ENCODE measurements at regions of chr18 and their contacts with region 1.

Region 1: GRCh38 chr18:55589625-55590291 is 1.8 kb upstream of the TCF4 start:
- DNase-seq: peak; percentile 93
- ATAC-seq: peak; percentile 88
- H3K4me3 ChIP-seq: peak overlapping the region; percentile 91
- H3K27ac ChIP-seq: peak overlapping the region; percentile 42
- H3K4me1 ChIP-seq: peaks cover 5% of the 10 kb centered on the region; the same call in 1 of the 2 replicates
- H3K27me3 ChIP-seq: no peaks in the 10 kb centered on the region
- CTCF ChIP-seq: no peak

Region 2: GRCh38 chr18:55343396-55344073 is 246.2 kb before region 1 on chr18:
- CTCF ChIA-PET with region 1: no interaction called
- POLR2A ChIA-PET with region 1: no interaction called
- intact Hi-C with region 1: loop called (anchors 5 kb)
- DNase-seq: peak; percentile 46
- ATAC-seq: peak; percentile 37; the same call in 1 of the 2 replicates
- H3K4me3 ChIP-seq: no peak overlapping the region
- H3K27ac ChIP-seq: no peak overlapping the region
- H3K4me1 ChIP-seq: no peaks in the 10 kb centered on the region
- H3K27me3 ChIP-seq: no peaks in the 10 kb centered on the region
- CTCF ChIP-seq: peak; percentile 69

Region 3: GRCh38 chr18:55415258-55415871 is 174.4 kb before region 1 on chr18:
- CTCF ChIA-PET with region 1: interaction called, 3 read pairs
- POLR2A ChIA-PET with region 1: no interaction called
- intact Hi-C with region 1: loop called (anchors 2 kb)
- DNase-seq: peak; percentile 74
- ATAC-seq: peak; percentile 91
- H3K4me3 ChIP-seq: no peak overlapping the region
- H3K27ac ChIP-seq: no peak overlapping the region
- H3K4me1 ChIP-seq: peaks cover 10% of the 10 kb centered on the region; the same call in 1 of the 2 replicates
- H3K27me3 ChIP-seq: no peaks in the 10 kb centered on the region
- CTCF ChIP-seq: peak; percentile 96

Region 4: DNA sequence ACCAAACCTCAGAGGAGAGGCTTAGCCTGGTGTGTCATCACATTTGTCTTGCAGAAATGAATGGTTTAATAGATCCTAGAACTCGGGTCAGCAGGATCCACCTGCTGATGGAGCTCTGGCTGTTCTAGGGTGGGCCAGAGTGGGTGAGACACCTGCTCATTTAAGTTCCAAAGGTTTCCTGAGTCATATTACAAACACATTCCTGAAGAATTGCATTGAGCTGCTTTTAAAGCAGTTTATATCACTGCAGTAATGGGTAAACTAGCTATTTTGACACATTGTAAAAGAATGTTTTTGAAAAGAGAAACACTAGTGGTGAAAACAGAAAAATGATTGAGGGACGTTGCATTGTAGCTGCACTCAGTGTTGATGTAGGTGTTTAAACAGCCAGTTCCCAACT is 173.5 kb after region 1 on chr18:
- CTCF ChIA-PET with region 1: no interaction called
- POLR2A ChIA-PET with region 1: no interaction called
- intact Hi-C with region 1: loop called (anchors 5 kb)
- DNase-seq: peak; percentile 91
- ATAC-seq: peak; percentile 93
- H3K4me3 ChIP-seq: no peak overlapping the region
- H3K27ac ChIP-seq: peak overlapping the region; percentile 53
- H3K4me1 ChIP-seq: peaks cover 40% of the 10 kb centered on the region
- H3K27me3 ChIP-seq: no peaks in the 10 kb centered on the region
- CTCF ChIP-seq: no peak

Region 5: GRCh38 chr18:55781481-55781957 is 191.8 kb after region 1 on chr18:
- CTCF ChIA-PET with region 1: no interaction called
- POLR2A ChIA-PET with region 1: no interaction called
- intact Hi-C with region 1: loop called (anchors 2 kb)
- DNase-seq: peak; percentile 69
- ATAC-seq: peak; percentile 71
- H3K4me3 ChIP-seq: no peak overlapping the region
- H3K27ac ChIP-seq: no peak overlapping the region
- H3K4me1 ChIP-seq: peaks cover 9% of the 10 kb centered on the region; the same call in 1 of the 2 replicates
- H3K27me3 ChIP-seq: no peaks in the 10 kb centered on the region
- CTCF ChIP-seq: peak; percentile 89

Region 6: DNA sequence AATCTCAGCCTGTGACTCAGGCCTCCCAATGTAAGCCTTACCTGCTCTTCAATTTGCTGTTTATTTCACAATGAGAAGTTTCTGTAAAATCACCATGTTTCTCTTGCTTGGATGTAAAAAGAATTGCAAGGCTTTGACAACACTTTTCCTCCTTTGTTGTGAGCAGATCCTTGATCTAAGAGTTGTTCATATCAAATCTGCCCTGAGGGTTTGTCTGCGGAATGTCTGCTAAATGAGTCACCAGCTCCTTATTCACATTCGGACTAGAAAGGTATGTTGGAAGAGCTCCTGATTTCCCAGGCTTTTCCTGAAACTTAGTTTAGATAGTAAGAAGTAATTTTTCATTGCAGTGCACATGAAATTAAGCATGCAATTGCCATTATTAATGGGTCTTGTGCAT is 266.5 kb after region 1 on chr18:
- CTCF ChIA-PET with region 1: no interaction called
- POLR2A ChIA-PET with region 1: no interaction called
- intact Hi-C with region 1: loop called (anchors 5 kb)
- DNase-seq: peak; percentile 99
- ATAC-seq: peak; percentile 95
- H3K4me3 ChIP-seq: peak overlapping the region; percentile 23; the same call in 1 of the 2 replicates
- H3K27ac ChIP-seq: peak overlapping the region; percentile 72
- H3K4me1 ChIP-seq: peaks cover 37% of the 10 kb centered on the region
- H3K27me3 ChIP-seq: no peaks in the 10 kb centered on the region
- CTCF ChIP-seq: no peak

Region 7: DNA sequence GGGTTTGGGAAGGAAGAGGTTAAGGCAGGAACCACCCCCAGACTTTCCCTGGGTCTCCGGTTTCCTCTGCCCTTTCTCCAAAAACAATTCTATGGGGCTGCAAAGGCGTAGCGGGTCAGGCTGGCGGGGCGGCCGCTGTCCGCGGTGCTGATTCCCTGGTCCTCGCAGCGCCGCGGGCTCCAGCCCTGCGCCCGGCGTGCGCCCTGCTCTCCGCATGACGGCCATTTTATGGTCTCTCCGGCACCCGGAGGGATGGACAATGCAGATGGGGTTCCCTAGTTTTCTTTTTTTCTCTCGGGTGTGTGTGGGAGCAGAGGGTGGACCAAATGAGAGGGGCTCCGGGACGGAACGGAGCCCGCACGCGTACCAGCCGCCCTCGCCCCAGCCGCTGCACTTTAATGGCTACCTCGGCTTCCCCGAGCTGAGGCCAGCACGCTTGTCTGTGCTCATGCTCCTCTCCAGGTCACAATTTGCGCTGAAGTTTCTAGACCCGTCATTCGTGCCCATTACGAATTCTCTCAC is 1764.2 kb after region 1 on chr18:
- CTCF ChIA-PET with region 1: no interaction called
- POLR2A ChIA-PET with region 1: no interaction called
- intact Hi-C with region 1: no loop called
- DNase-seq: no peak
- ATAC-seq: no peak
- H3K4me3 ChIP-seq: no peak overlapping the region
- H3K27ac ChIP-seq: no peak overlapping the region
- H3K4me1 ChIP-seq: no peaks in the 10 kb centered on the region
- H3K27me3 ChIP-seq: peaks cover 63% of the 10 kb centered on the region
- CTCF ChIP-seq: no peak